ENCODE measurements at regions of chr1 and their contacts with region 1.

Region 1: DNA sequence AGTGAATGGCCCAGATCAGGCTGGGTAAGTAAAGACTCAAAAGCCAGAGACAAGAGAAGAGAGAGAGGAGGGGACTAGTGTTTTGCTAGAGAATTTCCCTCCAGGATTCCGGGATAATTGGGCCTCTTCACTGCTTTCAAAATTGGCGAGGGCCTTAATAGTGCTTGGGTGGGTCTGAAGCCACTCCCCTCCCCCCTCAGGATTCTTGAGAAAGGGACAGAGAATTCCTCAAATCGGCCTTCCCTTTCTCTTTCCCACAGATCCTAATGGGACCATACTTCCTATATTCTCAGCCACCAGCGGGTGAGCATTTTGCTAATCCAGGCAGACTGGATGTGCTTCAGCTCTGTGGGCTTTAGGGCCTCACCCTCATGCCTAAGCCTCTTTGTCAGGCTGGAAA is 11.9 kb downstream of the SFN start:
- DNase-seq: no peak
- ATAC-seq: no peak
- H3K4me3 ChIP-seq: no peak overlapping the region
- H3K4me3 Mint-ChIP-seq: no peak overlapping the region
- H3K27ac ChIP-seq: no peak overlapping the region
- H3K27ac Mint-ChIP-seq: no peak overlapping the region
- H3K4me1 ChIP-seq: no peaks in the 10 kb centered on the region
- H3K4me1 Mint-ChIP-seq: no peaks in the 10 kb centered on the region
- H3K27me3 ChIP-seq: no peaks in the 10 kb centered on the region
- H3K27me3 Mint-ChIP-seq: no peaks in the 10 kb centered on the region
- CTCF ChIP-seq: no peak

Region 2: GRCh38 chr1:26602378-26602959 is 272.4 kb before region 1 on chr1:
- CTCF ChIA-PET with region 1: interaction called, 3 read pairs
- POLR2A ChIA-PET with region 1: no interaction called
- intact Hi-C with region 1: loop called (anchors 1 to 2 kb)
- DNase-seq: peak in 10 of 14 experiments; percentile 4 to 83 (median 30)
- ATAC-seq: peak; percentile 79
- H3K4me3 ChIP-seq: no peak overlapping the region
- H3K4me3 Mint-ChIP-seq: no peak overlapping the region
- H3K27ac ChIP-seq: no peak overlapping the region
- H3K27ac Mint-ChIP-seq: no peak overlapping the region
- H3K4me1 ChIP-seq: no peaks in the 10 kb centered on the region
- H3K4me1 Mint-ChIP-seq: peaks cover 14% of the 10 kb centered on the region
- H3K27me3 ChIP-seq: no peaks in the 10 kb centered on the region
- H3K27me3 Mint-ChIP-seq: no peaks in the 10 kb centered on the region
- CTCF ChIP-seq: peak; percentile 97

Region 3: DNA sequence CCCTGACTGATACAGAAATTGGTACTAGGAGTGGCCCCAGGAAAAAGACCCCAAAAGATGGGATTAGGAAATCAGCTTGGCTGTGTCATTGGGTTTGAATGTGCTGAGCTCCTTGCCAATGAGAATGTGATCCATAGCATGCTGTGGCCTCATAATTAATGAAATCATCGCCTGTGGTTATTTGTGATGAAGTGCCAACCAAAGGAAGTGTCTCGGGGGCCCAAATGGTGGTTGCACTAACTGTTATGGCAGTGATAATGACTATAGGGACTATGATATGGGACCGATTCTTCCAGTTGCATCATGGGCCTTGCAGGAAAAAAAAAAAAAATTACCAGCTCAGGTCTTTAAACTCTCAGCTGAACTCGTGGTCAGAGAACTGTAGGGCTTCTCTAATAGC is 63.8 kb before region 1 on chr1:
- CTCF ChIA-PET with region 1: interaction called, 5 read pairs
- POLR2A ChIA-PET with region 1: no interaction called
- intact Hi-C with region 1: loop called (anchors 1 kb)
- DNase-seq: peak in 1 of 14 experiments; percentile 44
- ATAC-seq: no peak
- H3K4me3 ChIP-seq: no peak overlapping the region
- H3K4me3 Mint-ChIP-seq: no peak overlapping the region
- H3K27ac ChIP-seq: no peak overlapping the region
- H3K27ac Mint-ChIP-seq: no peak overlapping the region
- H3K4me1 ChIP-seq: peaks cover 7% of the 10 kb centered on the region
- H3K4me1 Mint-ChIP-seq: peaks cover 12% of the 10 kb centered on the region
- H3K27me3 ChIP-seq: no peaks in the 10 kb centered on the region
- H3K27me3 Mint-ChIP-seq: no peaks in the 10 kb centered on the region
- CTCF ChIP-seq: no peak

Region 4: DNA sequence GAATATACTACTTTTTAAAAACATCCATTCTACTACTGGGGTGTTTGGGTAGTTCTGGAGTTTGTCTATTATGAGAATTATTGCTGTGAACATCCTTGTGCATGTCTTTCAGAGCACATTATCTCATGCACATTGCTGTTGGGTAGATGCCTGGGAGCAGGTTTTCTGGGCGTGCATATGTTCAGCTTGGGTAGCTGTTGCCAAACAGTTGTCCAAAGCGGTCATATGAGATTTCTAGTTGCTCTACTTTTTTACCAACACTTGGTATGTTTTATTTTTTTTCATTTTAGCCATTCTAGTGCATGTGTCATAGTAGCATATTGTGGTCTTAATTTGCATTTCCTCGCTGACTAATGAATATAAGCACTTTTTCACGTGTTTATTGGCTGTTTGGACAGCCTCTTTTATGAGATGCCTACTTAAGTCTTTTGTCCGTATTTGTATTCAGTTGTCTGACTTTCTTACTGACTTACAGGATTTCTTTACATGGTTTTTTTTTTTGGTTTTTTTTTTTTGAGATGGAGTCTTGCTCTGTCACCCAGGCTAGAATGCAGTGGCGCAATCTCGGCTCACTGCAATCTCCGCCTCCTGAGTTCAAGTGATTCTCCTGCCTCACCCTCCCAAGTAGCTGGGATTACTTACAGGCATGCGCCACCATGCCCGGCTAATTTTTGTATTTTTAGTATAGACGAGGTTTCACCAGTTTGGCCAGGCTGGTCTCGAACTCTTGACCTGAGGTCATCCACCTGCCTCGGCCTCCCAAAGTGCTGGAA is 30.3 kb before region 1 on chr1:
- CTCF ChIA-PET with region 1: no interaction called
- POLR2A ChIA-PET with region 1: no interaction called
- intact Hi-C with region 1: loop called in 1 of 2 experiments (anchors 5 kb)
- DNase-seq: no peak
- ATAC-seq: no peak
- H3K4me3 ChIP-seq: no peak overlapping the region
- H3K4me3 Mint-ChIP-seq: no peak overlapping the region
- H3K27ac ChIP-seq: no peak overlapping the region
- H3K27ac Mint-ChIP-seq: peak overlapping the region; percentile 44
- H3K4me1 ChIP-seq: peaks cover 7% of the 10 kb centered on the region
- H3K4me1 Mint-ChIP-seq: peaks cover 4% of the 10 kb centered on the region
- H3K27me3 ChIP-seq: no peaks in the 10 kb centered on the region
- H3K27me3 Mint-ChIP-seq: no peaks in the 10 kb centered on the region
- CTCF ChIP-seq: no peak

Region 5: DNA sequence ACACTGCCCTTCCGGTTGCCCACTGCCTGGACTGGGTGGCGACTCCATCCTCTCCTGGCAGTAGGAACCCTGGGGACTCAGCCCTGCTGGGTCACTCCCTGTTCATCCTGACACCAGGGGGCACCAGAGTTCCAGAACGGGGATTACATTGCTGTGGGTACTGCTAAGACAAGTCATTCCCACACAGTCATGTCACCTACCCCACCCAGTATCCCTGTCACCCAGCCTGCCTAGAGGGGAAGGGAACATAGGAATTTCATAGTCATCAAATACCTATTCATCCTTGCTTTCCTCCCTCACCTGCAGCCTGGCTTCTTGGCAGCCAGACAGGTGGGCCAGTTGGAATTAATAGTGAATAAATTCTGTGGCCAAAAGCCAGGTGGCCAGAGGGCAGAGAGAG is 21.7 kb before region 1 on chr1:
- CTCF ChIA-PET with region 1: no interaction called
- POLR2A ChIA-PET with region 1: no interaction called
- intact Hi-C with region 1: loop called (anchors 1 kb)
- DNase-seq: peak; percentile 71 to 91 (median 82)
- ATAC-seq: peak; percentile 94
- H3K4me3 ChIP-seq: no peak overlapping the region
- H3K4me3 Mint-ChIP-seq: no peak overlapping the region
- H3K27ac ChIP-seq: no peak overlapping the region
- H3K27ac Mint-ChIP-seq: no peak overlapping the region
- H3K4me1 ChIP-seq: no peaks in the 10 kb centered on the region
- H3K4me1 Mint-ChIP-seq: peaks cover 9% of the 10 kb centered on the region
- H3K27me3 ChIP-seq: no peaks in the 10 kb centered on the region
- H3K27me3 Mint-ChIP-seq: no peaks in the 10 kb centered on the region
- CTCF ChIP-seq: peak; percentile 91

Region 6: DNA sequence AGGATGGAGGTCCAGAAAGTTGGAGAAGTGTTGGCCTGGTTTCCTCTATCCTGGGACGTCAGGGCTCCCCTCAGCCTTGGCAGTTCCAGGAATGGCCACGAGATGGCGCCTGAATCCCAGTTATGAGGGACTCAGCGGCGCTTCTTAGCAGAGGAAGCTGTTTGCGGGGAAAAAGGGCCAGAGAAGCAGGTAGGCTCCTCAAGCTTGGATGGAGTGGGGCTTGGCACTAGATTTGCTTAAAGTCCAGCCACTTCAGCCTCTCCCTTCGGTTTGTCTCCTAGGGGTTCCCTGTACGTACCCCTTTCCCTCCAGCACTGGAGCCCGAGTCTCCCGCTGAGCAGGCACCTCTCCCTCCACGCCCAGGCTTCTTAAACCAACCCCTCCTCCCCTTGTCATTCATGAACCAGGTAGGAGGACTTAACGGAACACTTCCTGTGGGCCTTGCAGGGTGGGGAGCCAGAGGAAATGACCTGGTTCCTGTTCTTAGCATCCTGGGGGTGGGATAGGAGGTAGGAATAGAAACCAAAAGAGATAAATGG is 169.8 kb after region 1 on chr1:
- CTCF ChIA-PET with region 1: no interaction called
- POLR2A ChIA-PET with region 1: no interaction called
- intact Hi-C with region 1: no loop called
- DNase-seq: peak; percentile 77 to 95 (median 90)
- ATAC-seq: peak; percentile 93
- H3K4me3 ChIP-seq: peak overlapping the region; percentile 36
- H3K4me3 Mint-ChIP-seq: peak overlapping the region; percentile 39
- H3K27ac ChIP-seq: no peak overlapping the region
- H3K27ac Mint-ChIP-seq: no peak overlapping the region
- H3K4me1 ChIP-seq: peaks cover 20% of the 10 kb centered on the region
- H3K4me1 Mint-ChIP-seq: peaks cover 21% of the 10 kb centered on the region
- H3K27me3 ChIP-seq: no peaks in the 10 kb centered on the region
- H3K27me3 Mint-ChIP-seq: no peaks in the 10 kb centered on the region
- CTCF ChIP-seq: peak; percentile 91

Region 7: GRCh38 chr1:27306892-27307761 is 432.2 kb after region 1 on chr1:
- CTCF ChIA-PET with region 1: no interaction called
- POLR2A ChIA-PET with region 1: no interaction called
- intact Hi-C with region 1: no loop called
- DNase-seq: no peak
- ATAC-seq: no peak
- H3K4me3 ChIP-seq: no peak overlapping the region
- H3K4me3 Mint-ChIP-seq: no peak overlapping the region
- H3K27ac ChIP-seq: no peak overlapping the region
- H3K27ac Mint-ChIP-seq: no peak overlapping the region
- H3K4me1 ChIP-seq: no peaks in the 10 kb centered on the region
- H3K4me1 Mint-ChIP-seq: no peaks in the 10 kb centered on the region
- H3K27me3 ChIP-seq: no peaks in the 10 kb centered on the region
- H3K27me3 Mint-ChIP-seq: no peaks in the 10 kb centered on the region
- CTCF ChIP-seq: no peak

Measured in CD4-positive, alpha-beta T cell (primary cell).